ENCODE measurements at regions of chr16 and their contacts with region 1.

Region 1: DNA sequence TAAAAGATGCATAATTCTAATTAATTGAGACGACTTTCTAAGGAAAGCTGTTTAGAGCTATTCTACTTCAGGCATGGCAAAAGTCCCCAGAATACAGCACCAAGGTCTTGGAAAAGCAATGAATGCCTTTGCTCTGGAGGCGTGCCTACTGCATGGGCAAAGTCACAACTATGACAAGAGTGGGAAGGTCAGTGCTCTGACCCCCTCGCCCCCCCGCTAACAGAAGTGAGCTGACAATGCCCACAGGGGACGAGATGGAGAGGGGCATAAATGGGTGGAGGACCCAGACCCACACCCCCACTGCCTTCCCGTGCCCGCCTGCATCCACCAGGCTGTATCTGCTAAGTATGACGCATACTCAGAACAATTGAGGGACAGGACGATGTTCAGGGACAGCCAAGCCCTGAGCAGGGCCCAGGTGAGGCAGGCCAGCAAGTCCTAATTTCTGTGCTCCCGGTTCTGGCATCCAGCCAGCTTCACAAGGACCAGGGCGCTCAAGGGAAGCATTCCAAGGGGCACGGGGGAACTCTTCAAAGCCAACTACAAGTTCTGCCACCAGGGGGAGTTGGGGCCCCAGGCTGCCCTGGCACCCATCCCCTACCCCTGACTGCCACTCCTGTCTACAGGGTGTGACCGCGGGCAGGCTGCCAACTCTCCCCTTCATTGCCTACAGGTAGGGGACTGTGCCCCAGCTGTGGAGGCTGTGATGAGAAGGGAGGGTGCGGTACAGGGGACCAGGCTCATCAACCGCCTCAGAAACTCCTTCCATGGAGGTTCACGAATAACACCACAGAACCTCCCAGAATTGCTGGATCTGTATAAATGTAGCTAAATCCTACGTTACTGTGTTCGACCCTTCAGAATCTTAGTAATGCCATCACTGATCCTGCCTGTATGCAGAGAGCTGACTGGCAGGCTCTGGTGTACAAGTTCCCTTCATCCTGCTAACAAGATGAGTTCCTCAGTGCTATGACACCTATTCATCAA is 20.8 kb downstream of the NPRL3 start:
- DNase-seq: no peak
- ATAC-seq: peak; percentile 95
- H3K4me3 ChIP-seq: no peak overlapping the region
- H3K27ac ChIP-seq: no peak overlapping the region
- H3K4me1 ChIP-seq: no peaks in the 10 kb centered on the region
- H3K27me3 ChIP-seq: no peaks in the 10 kb centered on the region
- CTCF ChIP-seq: peak; percentile 69 to 78 (median 71)
- EP300 ChIP-seq: no peak
- POLR2A ChIP-seq: no peak
- RAD21 ChIP-seq: peak; percentile 45

Region 2: DNA sequence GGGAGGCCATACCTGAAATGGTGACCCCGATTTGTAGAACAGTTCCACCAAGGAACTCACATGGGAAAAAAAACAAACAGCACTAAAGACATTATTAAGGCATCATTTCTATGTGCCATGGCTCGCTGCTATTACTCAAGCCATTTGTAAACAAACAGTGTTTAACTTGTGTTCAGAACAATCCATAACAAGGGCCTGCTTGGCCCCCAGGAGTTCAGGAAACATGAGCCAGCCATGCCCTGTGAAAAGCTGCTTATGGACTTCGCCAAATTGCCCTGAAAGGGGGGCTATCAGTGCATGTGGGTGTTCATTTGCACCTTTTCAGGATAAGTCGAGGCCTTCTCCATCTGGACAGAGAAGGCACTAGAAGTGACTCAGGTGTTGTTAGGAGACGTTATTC is 72.2 kb before region 1 on chr16:
- CTCF ChIA-PET with region 1: no interaction called
- POLR2A ChIA-PET with region 1: no interaction called
- RAD21 ChIA-PET with region 1: no interaction called
- SMC1A ChIA-PET with region 1: no interaction called
- in situ Hi-C with region 1: no loop called
- intact Hi-C with region 1: no loop called
- DNase-seq: no peak
- ATAC-seq: no peak
- H3K4me3 ChIP-seq: no peak overlapping the region
- H3K27ac ChIP-seq: no peak overlapping the region
- H3K4me1 ChIP-seq: no peaks in the 10 kb centered on the region
- H3K27me3 ChIP-seq: no peaks in the 10 kb centered on the region
- CTCF ChIP-seq: no peak
- EP300 ChIP-seq: no peak
- POLR2A ChIP-seq: no peak
- RAD21 ChIP-seq: no peak

Region 3: GRCh38 chr16:140175-140857 is 22.6 kb after region 1 on chr16:
- CTCF ChIA-PET with region 1: no interaction called
- POLR2A ChIA-PET with region 1: no interaction called
- RAD21 ChIA-PET with region 1: no interaction called
- SMC1A ChIA-PET with region 1: no interaction called
- in situ Hi-C with region 1: no loop called
- intact Hi-C with region 1: no loop called
- DNase-seq: no peak
- ATAC-seq: no peak
- H3K4me3 ChIP-seq: no peak overlapping the region
- H3K27ac ChIP-seq: no peak overlapping the region
- H3K4me1 ChIP-seq: peaks cover 3% of the 10 kb centered on the region; the same call in 1 of the 2 replicates
- H3K27me3 ChIP-seq: no peaks in the 10 kb centered on the region
- CTCF ChIP-seq: no peak
- EP300 ChIP-seq: no peak
- POLR2A ChIP-seq: no peak
- RAD21 ChIP-seq: no peak

Region 4: GRCh38 chr16:154223-155030 is 36.8 kb after region 1 on chr16:
- CTCF ChIA-PET with region 1: no interaction called
- POLR2A ChIA-PET with region 1: no interaction called
- RAD21 ChIA-PET with region 1: no interaction called
- SMC1A ChIA-PET with region 1: no interaction called
- in situ Hi-C with region 1: no loop called
- intact Hi-C with region 1: no loop called
- DNase-seq: no peak
- ATAC-seq: peak; percentile 62
- H3K4me3 ChIP-seq: no peak overlapping the region
- H3K27ac ChIP-seq: no peak overlapping the region
- H3K4me1 ChIP-seq: no peaks in the 10 kb centered on the region
- H3K27me3 ChIP-seq: peaks cover 1 to 3% of the 10 kb centered on the region in 2 experiments; a peak in 3 of 4 replicates
- CTCF ChIP-seq: no peak
- EP300 ChIP-seq: no peak
- POLR2A ChIP-seq: no peak
- RAD21 ChIP-seq: no peak

Region 5: GRCh38 chr16:180938-181667 is 63.4 kb after region 1 on chr16:
- CTCF ChIA-PET with region 1: interaction called, 6 read pairs
- POLR2A ChIA-PET with region 1: no interaction called
- RAD21 ChIA-PET with region 1: no interaction called
- SMC1A ChIA-PET with region 1: no interaction called
- in situ Hi-C with region 1: no loop called
- intact Hi-C with region 1: loop called (anchors 2 kb)
- DNase-seq: peak; percentile 7
- ATAC-seq: peak; percentile 93
- H3K4me3 ChIP-seq: no peak overlapping the region
- H3K27ac ChIP-seq: no peak overlapping the region
- H3K4me1 ChIP-seq: peaks cover 8% of the 10 kb centered on the region; the same call in 1 of the 2 replicates
- H3K27me3 ChIP-seq: peaks cover 2 to 5% of the 10 kb centered on the region in 2 experiments; a peak in 3 of 4 replicates
- CTCF ChIP-seq: peak; percentile 87 to 97 (median 97)
- EP300 ChIP-seq: no peak
- POLR2A ChIP-seq: peak; percentile 75
- RAD21 ChIP-seq: peak; percentile 53

Region 6: GRCh38 chr16:361872-362701 is 244.4 kb after region 1 on chr16:
- CTCF ChIA-PET with region 1: interaction called, 12 read pairs
- POLR2A ChIA-PET with region 1: no interaction called
- RAD21 ChIA-PET with region 1: no interaction called
- SMC1A ChIA-PET with region 1: interaction called, 12 read pairs
- in situ Hi-C with region 1: no loop called
- intact Hi-C with region 1: no loop called
- DNase-seq: no peak
- ATAC-seq: peak; percentile 92
- H3K4me3 ChIP-seq: no peak overlapping the region
- H3K27ac ChIP-seq: no peak overlapping the region
- H3K4me1 ChIP-seq: no peaks in the 10 kb centered on the region
- H3K27me3 ChIP-seq: no peaks in the 10 kb centered on the region
- CTCF ChIP-seq: peak; percentile 70 to 84 (median 79)
- EP300 ChIP-seq: no peak
- POLR2A ChIP-seq: no peak
- RAD21 ChIP-seq: peak; percentile 86

Measured in GM12878 (cell line).